Naive thymus-derived CD4-positive, alpha-beta T cell (primary cell): ENCODE measurements at regions of chr7 and their contacts with region 1.

Region 1: DNA sequence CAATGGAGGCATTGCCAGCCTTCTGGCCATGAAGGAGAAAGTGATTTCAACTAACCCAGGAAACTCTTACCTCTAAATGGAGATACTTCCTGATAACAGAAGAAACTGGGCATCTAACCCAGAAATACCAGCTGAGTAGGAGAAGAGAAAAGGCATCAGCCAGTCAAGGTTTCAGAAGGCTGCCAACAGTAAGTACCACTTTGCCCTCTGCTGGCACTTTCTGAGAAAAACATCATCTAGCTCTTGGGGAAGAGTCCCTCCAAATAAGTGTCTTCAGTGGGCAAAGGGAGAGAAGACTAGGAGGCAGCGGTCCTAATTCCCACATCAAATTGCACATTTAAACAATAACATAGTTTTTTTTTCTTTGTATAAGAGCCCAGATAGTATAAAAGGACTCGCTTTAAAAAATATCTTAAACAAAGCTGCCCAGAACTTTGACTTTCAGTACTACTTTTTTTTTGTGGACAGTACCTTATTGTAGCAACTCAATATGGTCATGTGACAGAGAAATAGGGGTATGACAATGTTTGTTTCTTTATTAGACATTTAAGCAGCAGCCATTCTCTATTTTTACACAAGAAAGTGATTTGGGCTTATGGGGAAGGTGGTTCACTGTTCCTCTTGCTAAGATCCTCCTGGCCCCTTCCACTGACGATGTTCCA is 157.3 kb downstream of the CTTNBP2 start:
- DNase-seq: no peak
- ATAC-seq: no peak
- H3K4me3 ChIP-seq: no peak overlapping the region
- H3K4me3 Mint-ChIP-seq: no peak overlapping the region
- H3K27ac ChIP-seq: no peak overlapping the region
- H3K27ac Mint-ChIP-seq: no peak overlapping the region
- H3K4me1 ChIP-seq: no peaks in the 10 kb centered on the region
- H3K4me1 Mint-ChIP-seq: peaks cover 0 to 8% (median 0%) of the 10 kb centered on the region in 7 donors
- H3K27me3 ChIP-seq: no peaks in the 10 kb centered on the region
- H3K27me3 Mint-ChIP-seq: peaks cover 0 to 9% (median 7%) of the 10 kb centered on the region in 5 donors

Region 2: GRCh38 chr7:117212969-117213877 is 502.7 kb before region 1 on chr7:
- CTCF ChIA-PET with region 1: no interaction called
- POLR2A ChIA-PET with region 1: no interaction called
- intact Hi-C with region 1: loop called in 1 of 2 experiments (anchors 2 kb)
- DNase-seq: peak in 5 of 9 donors; percentile 15 to 32 (median 27)
- ATAC-seq: peak; percentile 83
- H3K4me3 ChIP-seq: no peak overlapping the region
- H3K4me3 Mint-ChIP-seq: no peak overlapping the region
- H3K27ac ChIP-seq: no peak overlapping the region
- H3K27ac Mint-ChIP-seq: no peak overlapping the region
- H3K4me1 ChIP-seq: no peaks in the 10 kb centered on the region
- H3K4me1 Mint-ChIP-seq: no peaks in the 10 kb centered on the region
- H3K27me3 ChIP-seq: no peaks in the 10 kb centered on the region
- H3K27me3 Mint-ChIP-seq: peaks cover 0 to 2% (median 0%) of the 10 kb centered on the region in 5 donors

Region 3: DNA sequence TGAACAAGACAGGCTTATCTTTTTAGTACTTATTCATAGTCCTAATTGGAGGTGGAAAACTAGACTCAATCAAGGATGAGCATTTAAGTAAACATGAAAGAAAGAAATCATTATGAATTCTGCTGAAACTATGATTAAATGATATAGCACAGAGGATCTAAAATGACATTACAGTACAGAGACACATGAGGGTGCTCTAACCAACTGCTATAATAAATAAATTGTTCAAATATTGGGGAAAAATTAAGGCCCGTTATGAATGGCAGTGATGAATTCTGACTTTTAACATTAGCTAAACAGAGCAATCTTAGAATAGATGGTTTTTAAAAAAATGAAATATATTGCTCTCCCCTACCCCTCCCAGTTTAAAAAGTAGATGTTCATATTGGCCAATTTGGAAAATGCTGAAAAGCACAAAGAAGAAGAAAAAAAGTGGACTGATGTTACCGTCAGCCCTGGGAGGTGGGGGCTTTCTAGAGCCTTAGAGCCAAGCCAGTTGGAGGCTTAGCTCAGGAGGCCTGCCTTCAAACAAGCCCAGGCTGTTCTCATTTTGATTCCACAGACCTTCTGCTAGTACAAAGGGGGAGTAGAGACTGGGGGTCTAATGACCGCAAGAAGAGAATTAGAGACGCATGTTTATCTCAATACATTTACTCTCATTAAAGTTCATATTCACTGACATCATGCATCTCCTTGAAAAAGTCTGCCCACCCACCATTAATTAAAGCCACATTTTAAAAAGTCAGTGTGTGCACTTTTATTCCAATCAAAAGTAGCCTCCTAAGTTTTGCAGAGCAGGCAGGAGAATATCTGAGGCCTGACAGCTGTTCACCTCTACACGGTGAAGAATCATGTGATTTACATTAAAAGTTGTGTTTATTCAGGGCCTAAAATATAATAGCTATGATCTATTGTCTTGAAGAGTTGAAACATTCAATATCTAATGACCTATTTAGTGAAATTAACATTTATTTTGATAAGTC is 403.0 kb before region 1 on chr7:
- CTCF ChIA-PET with region 1: no interaction called
- POLR2A ChIA-PET with region 1: no interaction called
- intact Hi-C with region 1: no loop called
- DNase-seq: no peak
- ATAC-seq: no peak
- H3K4me3 ChIP-seq: no peak overlapping the region
- H3K4me3 Mint-ChIP-seq: no peak overlapping the region
- H3K27ac ChIP-seq: no peak overlapping the region
- H3K27ac Mint-ChIP-seq: no peak overlapping the region
- H3K4me1 ChIP-seq: no peaks in the 10 kb centered on the region
- H3K4me1 Mint-ChIP-seq: no peaks in the 10 kb centered on the region
- H3K27me3 ChIP-seq: no peaks in the 10 kb centered on the region
- H3K27me3 Mint-ChIP-seq: peaks cover 9 to 19% (median 15%) of the 10 kb centered on the region in 5 donors

Region 4: GRCh38 chr7:117399820-117400422 is 316.0 kb before region 1 on chr7:
- CTCF ChIA-PET with region 1: no interaction called
- POLR2A ChIA-PET with region 1: no interaction called
- intact Hi-C with region 1: loop called in 1 of 2 experiments (anchors 5 kb)
- DNase-seq: no peak
- ATAC-seq: no peak
- H3K4me3 ChIP-seq: no peak overlapping the region
- H3K4me3 Mint-ChIP-seq: no peak overlapping the region
- H3K27ac ChIP-seq: no peak overlapping the region
- H3K27ac Mint-ChIP-seq: no peak overlapping the region
- H3K4me1 ChIP-seq: no peaks in the 10 kb centered on the region
- H3K4me1 Mint-ChIP-seq: no peaks in the 10 kb centered on the region
- H3K27me3 ChIP-seq: no peaks in the 10 kb centered on the region
- H3K27me3 Mint-ChIP-seq: no peaks in the 10 kb centered on the region

Region 5: DNA sequence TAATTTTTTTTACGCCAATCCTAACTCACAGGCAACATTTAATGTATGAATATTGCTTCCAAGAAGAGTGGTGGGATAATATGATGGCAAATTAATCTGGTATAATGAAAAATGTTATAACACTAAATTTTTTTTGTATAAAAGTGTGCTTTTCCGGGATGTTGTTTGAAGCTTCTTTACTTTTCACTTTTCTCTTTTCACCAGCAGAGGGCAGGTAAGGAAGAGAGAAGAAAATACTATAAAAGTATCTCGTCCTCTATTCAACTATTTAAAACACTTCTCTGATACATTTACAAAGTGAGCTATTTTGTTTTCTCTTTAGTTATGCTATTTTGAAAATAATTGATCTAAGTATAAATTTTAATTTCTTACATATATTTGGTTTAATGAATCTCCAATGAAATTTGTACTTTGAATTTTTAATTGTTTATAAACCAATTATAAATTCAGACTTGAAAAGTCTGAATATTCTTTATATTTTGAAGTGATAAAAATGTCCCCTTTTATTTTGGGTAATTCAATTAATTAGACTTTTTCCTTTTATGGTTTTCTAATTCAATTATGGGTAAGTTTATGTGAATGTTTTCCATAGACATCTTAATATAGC is 256.8 kb before region 1 on chr7:
- CTCF ChIA-PET with region 1: no interaction called
- POLR2A ChIA-PET with region 1: no interaction called
- intact Hi-C with region 1: loop called in 1 of 2 experiments (anchors 1 kb)
- DNase-seq: no peak
- ATAC-seq: no peak
- H3K4me3 ChIP-seq: no peak overlapping the region
- H3K4me3 Mint-ChIP-seq: no peak overlapping the region
- H3K27ac ChIP-seq: no peak overlapping the region
- H3K27ac Mint-ChIP-seq: no peak overlapping the region
- H3K4me1 ChIP-seq: no peaks in the 10 kb centered on the region
- H3K4me1 Mint-ChIP-seq: no peaks in the 10 kb centered on the region
- H3K27me3 ChIP-seq: no peaks in the 10 kb centered on the region
- H3K27me3 Mint-ChIP-seq: no peaks in the 10 kb centered on the region

Region 6: GRCh38 chr7:117623606-117624005 is 92.3 kb before region 1 on chr7:
- CTCF ChIA-PET with region 1: no interaction called
- POLR2A ChIA-PET with region 1: no interaction called
- intact Hi-C with region 1: no loop called
- DNase-seq: no peak
- ATAC-seq: no peak
- H3K4me3 ChIP-seq: no peak overlapping the region
- H3K4me3 Mint-ChIP-seq: no peak overlapping the region
- H3K27ac ChIP-seq: no peak overlapping the region
- H3K27ac Mint-ChIP-seq: no peak overlapping the region
- H3K4me1 ChIP-seq: no peaks in the 10 kb centered on the region
- H3K4me1 Mint-ChIP-seq: no peaks in the 10 kb centered on the region
- H3K27me3 ChIP-seq: no peaks in the 10 kb centered on the region
- H3K27me3 Mint-ChIP-seq: no peaks in the 10 kb centered on the region

Region 7: GRCh38 chr7:117791877-117792780 is 76.2 kb after region 1 on chr7:
- CTCF ChIA-PET with region 1: no interaction called
- POLR2A ChIA-PET with region 1: no interaction called
- intact Hi-C with region 1: no loop called
- DNase-seq: no peak
- ATAC-seq: peak; percentile 61
- H3K4me3 ChIP-seq: no peak overlapping the region
- H3K4me3 Mint-ChIP-seq: no peak overlapping the region
- H3K27ac ChIP-seq: no peak overlapping the region
- H3K27ac Mint-ChIP-seq: no peak overlapping the region
- H3K4me1 ChIP-seq: no peaks in the 10 kb centered on the region
- H3K4me1 Mint-ChIP-seq: peaks cover 0 to 6% (median 0%) of the 10 kb centered on the region in 7 donors
- H3K27me3 ChIP-seq: no peaks in the 10 kb centered on the region
- H3K27me3 Mint-ChIP-seq: peaks cover 0 to 17% (median 0%) of the 10 kb centered on the region in 5 donors